Activated CD8-positive, alpha-beta T cell treated with anti-CD3 and anti-CD28 coated beads for 36 hours (primary cell): ENCODE measurements at regions of chr6 and their contacts with region 1.

Region 1: GRCh38 chr6:158686791-158687381 is 37.0 kb downstream of the SYTL3 start:
- DNase-seq: peak; percentile 49
- ATAC-seq: peak; percentile 87
- H3K4me3 Mint-ChIP-seq: no peak overlapping the region
- H3K27ac Mint-ChIP-seq: peak overlapping the region; percentile 26
- H3K4me1 Mint-ChIP-seq: peaks cover 59% of the 10 kb centered on the region
- H3K27me3 Mint-ChIP-seq: no peaks in the 10 kb centered on the region
- CTCF ChIP-seq: no peak

Region 2: GRCh38 chr6:158631678-158632537 is 55.0 kb before region 1 on chr6:
- CTCF ChIA-PET with region 1: interaction called, 67 read pairs
- POLR2A ChIA-PET with region 1: no interaction called
- intact Hi-C with region 1: no loop called
- DNase-seq: no peak
- ATAC-seq: no peak
- H3K4me3 Mint-ChIP-seq: no peak overlapping the region
- H3K27ac Mint-ChIP-seq: peak overlapping the region; percentile 77
- H3K4me1 Mint-ChIP-seq: peaks cover 50% of the 10 kb centered on the region
- H3K27me3 Mint-ChIP-seq: no peaks in the 10 kb centered on the region
- CTCF ChIP-seq: no peak

Region 3: DNA sequence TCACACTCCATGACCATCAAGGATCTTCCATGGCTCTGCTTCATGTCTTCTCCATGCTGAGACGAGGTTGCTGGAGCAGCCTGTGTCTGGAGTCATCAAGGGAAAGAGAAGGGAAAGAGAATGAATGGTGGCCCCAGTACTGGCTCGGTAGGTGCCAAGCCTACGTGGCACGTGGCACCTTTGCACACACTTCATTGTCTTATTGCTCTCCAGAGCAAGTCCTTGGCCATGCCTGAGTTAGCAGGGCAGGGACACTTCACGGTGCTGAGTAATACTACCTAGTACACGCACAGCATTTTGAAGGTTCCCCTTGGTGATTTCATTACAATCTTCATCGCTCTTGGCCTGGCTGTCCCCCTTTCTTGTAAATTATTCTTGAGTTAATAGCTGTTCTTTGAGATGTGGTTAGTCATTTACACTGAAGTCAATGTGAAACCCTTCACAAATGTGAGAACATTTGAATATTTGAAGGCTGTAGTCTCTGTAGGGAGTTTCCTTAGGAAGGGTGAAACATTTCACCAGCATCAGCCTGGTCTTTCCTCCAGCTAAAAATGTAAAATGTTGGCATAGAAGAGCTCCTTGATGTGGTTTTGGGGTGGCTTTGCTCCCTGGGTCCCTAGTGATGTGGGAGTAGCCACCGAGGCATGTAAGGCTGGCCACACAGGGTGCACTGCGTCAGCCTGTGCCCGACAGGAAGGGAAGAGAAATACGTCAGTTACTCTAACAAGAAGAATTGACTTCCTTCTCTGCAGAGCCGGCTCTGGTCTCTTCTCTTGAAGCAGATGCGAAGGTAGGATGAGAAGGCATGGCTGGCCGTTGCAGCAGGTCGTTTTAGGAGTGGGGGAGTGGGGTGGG is 37.4 kb before region 1 on chr6 and contains the start of gene SYTL3:
- CTCF ChIA-PET with region 1: interaction called, 67 read pairs
- POLR2A ChIA-PET with region 1: interaction called, 8 read pairs
- intact Hi-C with region 1: loop called (anchors 5 kb)
- DNase-seq: peak; percentile 94
- ATAC-seq: peak; percentile 60
- H3K4me3 Mint-ChIP-seq: peak within 1 kb of the TSS; percentile 83
- H3K27ac Mint-ChIP-seq: peak within 1 kb of the TSS; percentile 97
- H3K4me1 Mint-ChIP-seq: peaks cover 68% of the 10 kb centered on the region
- H3K27me3 Mint-ChIP-seq: peaks cover 2% of the 10 kb centered on the region
- CTCF ChIP-seq: no peak
- total RNA-seq, gene SYTL3: 151 to 163 TPM

Region 4: DNA sequence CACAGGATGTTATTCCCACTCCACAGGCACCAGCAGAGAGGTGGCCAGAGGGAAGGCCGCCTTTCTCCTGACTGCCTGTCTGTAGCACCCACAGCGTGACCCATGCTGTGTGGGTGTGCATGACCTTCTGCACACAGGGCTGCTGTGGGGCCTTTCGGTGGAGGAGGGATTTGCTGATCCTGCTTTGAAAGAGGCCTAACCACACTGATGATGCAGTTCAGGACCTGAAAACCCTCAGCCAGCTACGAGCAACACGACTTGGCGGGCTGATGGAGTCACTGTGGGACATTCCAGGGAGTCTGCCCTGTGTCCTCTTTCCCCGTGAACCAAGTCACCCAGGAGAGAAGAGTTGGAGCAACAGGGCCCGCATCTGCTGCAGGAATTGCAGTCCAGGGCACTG is 12.0 kb after region 1 on chr6:
- CTCF ChIA-PET with region 1: interaction called, 19 read pairs
- POLR2A ChIA-PET with region 1: no interaction called
- intact Hi-C with region 1: no loop called
- DNase-seq: peak; percentile 70
- ATAC-seq: peak; percentile 74
- H3K4me3 Mint-ChIP-seq: no peak overlapping the region
- H3K27ac Mint-ChIP-seq: no peak overlapping the region
- H3K4me1 Mint-ChIP-seq: peaks cover 32% of the 10 kb centered on the region
- H3K27me3 Mint-ChIP-seq: no peaks in the 10 kb centered on the region
- CTCF ChIP-seq: no peak

Region 5: DNA sequence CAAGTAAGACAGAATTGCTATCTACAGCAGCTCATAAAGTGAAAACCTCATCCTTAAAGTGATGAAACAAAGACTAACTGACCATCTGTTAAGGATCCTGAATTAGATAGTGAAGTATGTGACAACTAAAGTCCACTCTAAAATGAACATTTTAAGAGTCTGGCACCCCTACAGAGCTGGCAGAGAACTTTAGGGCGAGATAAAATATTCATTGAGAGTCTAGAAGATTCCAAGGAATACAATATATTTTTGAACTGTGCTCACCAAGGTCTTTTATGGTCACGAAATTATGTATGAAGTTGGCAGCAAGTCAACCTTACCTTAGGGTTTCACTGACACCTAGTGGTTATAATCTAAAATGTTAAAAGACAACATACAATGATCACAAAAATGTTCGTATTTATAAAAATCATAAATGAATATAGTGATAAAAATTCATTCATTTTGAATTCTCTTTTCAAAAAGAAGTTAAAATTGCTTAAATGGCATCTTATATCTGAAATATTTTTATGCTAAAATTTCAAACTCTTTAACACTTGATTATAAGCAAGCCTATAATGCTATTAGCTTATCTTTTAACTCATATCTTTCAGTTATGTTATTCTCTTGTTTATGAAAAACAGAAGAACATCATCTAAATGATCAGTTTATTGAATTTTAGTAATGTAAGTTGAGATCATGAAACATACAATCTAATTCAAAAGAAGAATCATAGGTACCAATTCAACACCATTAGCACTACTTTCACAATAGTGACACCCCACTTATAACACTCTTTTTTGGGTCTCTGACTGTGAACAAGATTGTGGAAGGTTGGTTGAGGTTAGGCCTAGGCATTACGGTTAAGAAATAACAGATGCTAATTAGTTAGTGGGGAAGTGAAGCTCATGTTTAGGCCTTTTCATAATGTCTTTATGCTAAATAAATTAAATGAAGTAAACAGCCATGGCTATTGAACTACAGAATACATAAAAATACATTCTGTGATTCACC is 285.7 kb after region 1 on chr6:
- CTCF ChIA-PET with region 1: interaction called, 11 read pairs
- POLR2A ChIA-PET with region 1: no interaction called
- intact Hi-C with region 1: no loop called
- DNase-seq: no peak
- ATAC-seq: peak; percentile 71
- H3K4me3 Mint-ChIP-seq: no peak overlapping the region
- H3K27ac Mint-ChIP-seq: no peak overlapping the region
- H3K4me1 Mint-ChIP-seq: no peaks in the 10 kb centered on the region
- H3K27me3 Mint-ChIP-seq: no peaks in the 10 kb centered on the region
- CTCF ChIP-seq: peak; percentile 81